ENCODE measurements at regions of chr10 and their contacts with region 1.

Region 1: GRCh38 chr10:22228943-22229801 is 11.4 kb upstream of the EBLN1 start:
- DNase-seq: peak; percentile 92
- H3K4me3 ChIP-seq: peak overlapping the region; percentile 71 to 84
- H3K27ac ChIP-seq: peak overlapping the region; percentile 65 to 93
- H3K4me1 ChIP-seq: peaks cover 0 to 4% of the 10 kb centered on the region in 2 experiments; a peak in 2 of 4 replicates
- H3K27me3 ChIP-seq: no peaks in the 10 kb centered on the region
- CTCF ChIP-seq: no peak
- EP300 ChIP-seq: peak in 1 of 2 experiments; percentile 40; a peak in 1 of 4 replicates
- RAD21 ChIP-seq: 0 out of 2 replicates have a peak, but pooled peaks have one; percentile 9

Region 2: GRCh38 chr10:22003079-22003913 is 225.9 kb before region 1 on chr10 and contains the start of gene DNAJC1:
- CTCF ChIA-PET with region 1: interaction called, 5 read pairs
- POLR2A ChIA-PET with region 1: interaction called, 12 read pairs
- DNase-seq: peak; percentile 95
- H3K4me3 ChIP-seq: peak within 1 kb of the TSS; percentile 87 to 94
- H3K27ac ChIP-seq: peak within 1 kb of the TSS; percentile 74 to 91
- H3K4me1 ChIP-seq: peaks cover 0 to 9% of the 10 kb centered on the region in 2 experiments; a peak in 2 of 4 replicates
- H3K27me3 ChIP-seq: no peaks in the 10 kb centered on the region
- CTCF ChIP-seq: no peak
- EP300 ChIP-seq: no peak
- RAD21 ChIP-seq: 0 out of 2 replicates have a peak, but pooled peaks have one; percentile 1
- polyA plus RNA-seq, gene DNAJC1: 8.0 and 9.3 TPM in 2 replicates

Region 3: GRCh38 chr10:22316285-22317120 is 87.3 kb after region 1 on chr10 and contains the start of gene COMMD3:
- CTCF ChIA-PET with region 1: interaction called, 10 read pairs
- POLR2A ChIA-PET with region 1: interaction called, 38 read pairs
- DNase-seq: peak; percentile 91
- H3K4me3 ChIP-seq: peak within 1 kb of the TSS; percentile 57 to 93
- H3K27ac ChIP-seq: peak within 1 kb of the TSS; percentile 81 to 96
- H3K4me1 ChIP-seq: peaks cover 5 to 14% of the 10 kb centered on the region in 2 experiments; a peak in 3 of 4 replicates
- H3K27me3 ChIP-seq: no peaks in the 10 kb centered on the region
- CTCF ChIP-seq: no peak
- EP300 ChIP-seq: no peak
- RAD21 ChIP-seq: no peak
- polyA plus RNA-seq, gene COMMD3: 26.9 and 36.5 TPM in 2 replicates